H1 (cell line): ENCODE measurements at regions of chr4 and their contacts with region 1.

Region 1: DNA sequence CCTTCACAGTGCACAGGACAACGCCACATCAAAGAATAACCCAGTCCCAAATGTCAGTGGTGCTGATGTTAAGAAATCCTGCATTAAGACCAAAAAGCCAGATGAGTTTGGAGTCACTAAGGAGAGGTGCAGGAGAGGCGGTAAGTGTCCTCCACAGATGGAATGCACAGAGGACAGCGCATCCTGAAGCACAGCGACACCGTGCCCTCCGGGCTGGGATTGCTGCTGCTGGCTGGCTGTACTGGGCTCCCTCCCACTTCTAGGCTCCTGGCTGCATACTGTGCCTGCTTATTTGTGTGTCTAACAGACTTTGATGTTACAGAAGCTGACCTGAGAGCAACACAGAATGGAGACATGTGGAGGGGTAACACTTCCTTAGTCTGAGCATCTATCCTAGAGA is 325.6 kb upstream of the BOD1L1 start:
- DNase-seq: no peak
- H3K4me3 ChIP-seq: no peak overlapping the region
- H3K27ac ChIP-seq: no peak overlapping the region
- H3K4me1 ChIP-seq: peaks cover 0 to 7% (median 4%) of the 10 kb centered on the region in 4 experiments; a peak in 5 of 7 replicates
- H3K27me3 ChIP-seq: no peaks in the 10 kb centered on the region; a peak in 1 of 7 replicates
- CTCF ChIP-seq: no peak
- EP300 ChIP-seq: no peak
- POLR2A ChIP-seq: no peak
- RAD21 ChIP-seq: 0 out of 4 replicates have a peak, but pooled peaks of 1 of the 2 experiments have one; percentile 3

Region 2: DNA sequence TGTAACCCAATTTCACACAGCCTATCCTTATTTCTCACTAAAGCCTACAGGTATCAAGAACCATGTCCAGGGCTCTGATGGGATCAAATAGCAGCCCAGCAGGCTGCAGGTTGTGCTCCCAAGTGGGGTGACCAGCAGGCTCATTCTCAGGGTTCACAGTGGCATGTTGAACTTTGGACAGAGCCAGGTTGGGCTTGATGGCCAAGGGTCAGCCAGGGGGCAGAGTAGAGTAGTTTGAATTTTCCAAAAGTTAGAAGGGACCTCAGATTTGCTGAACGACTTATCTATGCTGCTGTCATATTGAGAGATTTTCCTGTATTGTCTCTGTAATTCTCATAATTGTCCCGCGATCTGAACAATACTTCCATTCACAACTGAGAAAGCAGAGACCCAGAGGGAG is 14.8 kb before region 1 on chr4:
- CTCF ChIA-PET with region 1: interaction called, 10 read pairs
- POLR2A ChIA-PET with region 1: no interaction called
- DNase-seq: peak in 1 of 2 experiments; percentile 48
- H3K4me3 ChIP-seq: no peak overlapping the region
- H3K27ac ChIP-seq: no peak overlapping the region
- H3K4me1 ChIP-seq: no peaks in the 10 kb centered on the region
- H3K27me3 ChIP-seq: no peaks in the 10 kb centered on the region
- CTCF ChIP-seq: peak; percentile 25 to 43 (median 31); a peak in 3 of 4 replicates
- EP300 ChIP-seq: no peak
- POLR2A ChIP-seq: no peak
- RAD21 ChIP-seq: peak; percentile 34 to 51; a peak in 3 of 4 replicates

Region 3: DNA sequence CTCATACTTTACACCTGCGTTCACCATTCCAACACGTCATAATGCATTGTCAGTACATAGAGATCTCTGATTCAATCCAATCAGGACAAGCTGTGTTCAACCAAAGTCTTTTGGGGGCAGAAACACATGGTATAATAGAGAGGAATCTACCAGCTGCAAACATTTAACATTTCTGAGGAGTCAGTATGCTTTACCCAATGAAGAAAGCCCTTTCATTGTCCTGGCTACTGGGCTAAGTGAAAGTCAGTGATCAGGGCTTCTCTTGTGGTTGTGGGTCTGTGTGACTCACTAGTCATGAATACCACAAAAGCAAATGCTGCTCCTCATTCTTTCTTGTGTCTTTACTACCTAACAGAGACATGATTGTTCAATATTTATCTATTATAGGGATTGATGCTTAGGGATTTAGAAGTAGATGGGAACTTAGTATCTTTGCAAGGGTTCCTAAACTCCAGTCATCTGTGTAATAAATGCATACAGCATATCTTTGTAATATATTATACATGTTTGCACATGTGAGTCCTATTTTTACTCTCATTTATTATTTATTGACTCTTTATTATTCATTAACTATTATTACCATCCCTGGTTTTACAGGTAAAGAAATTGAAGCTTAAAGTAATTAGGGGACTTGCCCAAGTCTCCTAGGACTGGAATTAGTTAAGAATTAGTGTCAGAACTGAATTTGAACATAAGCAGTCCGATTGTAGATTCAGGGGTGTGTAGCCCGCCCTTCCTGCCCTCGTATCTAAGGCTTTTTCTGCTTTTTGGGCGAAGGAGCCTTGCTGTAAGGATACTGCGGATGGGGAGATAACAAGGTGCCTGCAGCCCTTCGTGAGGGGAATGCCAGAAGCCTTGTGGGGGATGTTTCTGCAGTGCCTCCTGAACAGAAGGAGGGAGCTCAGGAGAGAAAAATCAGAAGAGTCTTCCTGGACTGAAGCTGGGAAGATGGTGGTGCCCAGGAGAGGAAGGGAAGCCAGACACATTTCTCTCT is 27.5 kb after region 1 on chr4:
- CTCF ChIA-PET with region 1: no interaction called
- POLR2A ChIA-PET with region 1: no interaction called
- DNase-seq: no peak
- H3K4me3 ChIP-seq: no peak overlapping the region
- H3K27ac ChIP-seq: no peak overlapping the region; the same call in 1 of the 2 replicates
- H3K4me1 ChIP-seq: no peaks in the 10 kb centered on the region
- H3K27me3 ChIP-seq: no peaks in the 10 kb centered on the region
- CTCF ChIP-seq: no peak
- EP300 ChIP-seq: no peak
- POLR2A ChIP-seq: no peak
- RAD21 ChIP-seq: no peak